ENCODE measurements at regions of chr19 and their contacts with region 1.

Region 1: DNA sequence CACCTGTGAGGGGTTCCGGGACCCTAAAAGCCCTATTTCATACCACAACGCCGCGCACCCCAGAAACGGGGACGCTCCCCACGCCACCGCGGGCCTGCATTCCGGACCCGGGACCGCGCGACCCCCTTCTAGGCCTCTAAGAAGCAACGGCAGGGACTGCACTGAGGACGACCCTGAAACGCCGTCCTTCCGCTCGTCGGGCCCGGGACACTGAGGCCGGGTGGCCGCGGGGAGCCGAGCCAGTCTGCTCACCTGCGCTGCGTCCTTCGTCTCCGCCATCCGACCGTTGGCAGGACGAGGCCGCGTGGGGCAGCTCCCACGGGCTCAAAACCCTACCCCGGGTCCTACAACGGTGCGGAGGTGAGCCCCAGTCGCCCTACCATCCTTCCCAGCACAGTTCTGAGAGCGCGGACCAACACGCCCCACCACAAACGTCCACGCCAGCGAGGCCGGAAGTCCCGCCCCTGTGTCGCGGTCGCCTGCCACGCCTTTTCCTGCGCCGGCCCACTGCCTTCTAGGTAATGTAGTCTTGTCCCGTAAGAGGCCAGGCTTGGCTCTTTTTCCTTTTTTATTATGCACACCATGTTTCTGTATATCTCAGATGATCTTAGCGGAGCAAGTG is at the start of gene ZNF550:
- DNase-seq: peak; percentile 89 to 90
- H3K4me3 ChIP-seq: peak within 1 kb of the TSS; percentile 91
- H3K4me3 Mint-ChIP-seq: peak within 1 kb of the TSS; percentile 99
- H3K27ac Mint-ChIP-seq: peak within 1 kb of the TSS; percentile 94
- H3K4me1 ChIP-seq: no peaks in the 10 kb centered on the region
- H3K4me1 Mint-ChIP-seq: peaks cover 11% of the 10 kb centered on the region
- H3K27me3 ChIP-seq: no peaks in the 10 kb centered on the region
- H3K27me3 Mint-ChIP-seq: no peaks in the 10 kb centered on the region
- CTCF ChIP-seq: no peak
- total RNA-seq, gene ZNF550: 11.2 and 11.5 TPM in 2 replicates

Region 2: DNA sequence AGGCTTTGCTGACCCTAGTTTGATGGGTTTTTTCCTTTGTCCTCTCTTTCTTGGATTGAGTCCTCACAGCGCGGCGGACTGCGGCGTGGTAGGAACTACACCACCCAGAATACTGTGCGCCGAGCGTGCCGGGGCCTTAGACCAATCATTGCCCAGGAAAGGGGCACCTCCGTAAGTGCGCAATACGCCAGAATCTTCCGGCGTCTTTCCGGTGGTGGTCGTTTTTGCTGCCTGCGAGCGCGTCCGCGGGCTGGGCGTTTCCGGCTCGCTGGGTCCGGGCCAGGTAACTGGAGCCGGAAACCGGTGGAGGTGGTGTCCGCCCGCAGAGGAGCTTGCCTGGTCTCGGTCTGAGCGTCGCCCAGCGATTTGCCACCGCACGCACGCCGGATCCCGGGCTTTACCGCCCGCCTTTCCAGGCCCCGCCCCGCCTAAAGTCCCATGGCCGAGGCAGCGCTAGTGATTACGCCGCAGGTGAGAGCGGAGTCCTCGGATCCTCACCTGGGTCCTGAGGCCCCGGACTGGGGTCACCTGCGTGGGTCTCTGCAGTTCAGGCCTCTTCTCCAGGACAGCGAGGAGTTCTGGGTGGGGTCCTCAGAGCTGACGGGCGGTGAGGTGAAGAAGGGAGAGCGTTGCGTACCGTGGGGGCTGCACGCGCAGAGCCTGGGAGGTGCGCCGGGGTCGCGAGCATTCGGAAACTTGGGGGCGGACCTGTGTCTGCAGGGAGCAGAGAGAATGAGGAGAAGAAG is 32.2 kb before region 1 on chr19 and contains the start of gene ZNF549:
- CTCF ChIA-PET with region 1: no interaction called
- POLR2A ChIA-PET with region 1: no interaction called
- intact Hi-C with region 1: loop called (anchors 1 kb)
- DNase-seq: peak; percentile 88 to 91
- H3K4me3 ChIP-seq: peak within 1 kb of the TSS; percentile 86
- H3K4me3 Mint-ChIP-seq: peak within 1 kb of the TSS; percentile 87
- H3K27ac Mint-ChIP-seq: peak within 1 kb of the TSS; percentile 83
- H3K4me1 ChIP-seq: no peaks in the 10 kb centered on the region
- H3K4me1 Mint-ChIP-seq: peaks cover 8% of the 10 kb centered on the region
- H3K27me3 ChIP-seq: no peaks in the 10 kb centered on the region
- H3K27me3 Mint-ChIP-seq: no peaks in the 10 kb centered on the region
- CTCF ChIP-seq: no peak
- total RNA-seq, gene ZNF549: 5.2 and 5.5 TPM in 2 replicates

Region 3: GRCh38 chr19:57537953-57538547 is 21.5 kb before region 1 on chr19:
- CTCF ChIA-PET with region 1: no interaction called
- POLR2A ChIA-PET with region 1: no interaction called
- intact Hi-C with region 1: loop called (anchors 1 kb)
- DNase-seq: no peak
- H3K4me3 ChIP-seq: no peak overlapping the region
- H3K4me3 Mint-ChIP-seq: no peak overlapping the region
- H3K27ac Mint-ChIP-seq: no peak overlapping the region
- H3K4me1 ChIP-seq: no peaks in the 10 kb centered on the region
- H3K4me1 Mint-ChIP-seq: no peaks in the 10 kb centered on the region
- H3K27me3 ChIP-seq: no peaks in the 10 kb centered on the region
- H3K27me3 Mint-ChIP-seq: no peaks in the 10 kb centered on the region
- CTCF ChIP-seq: no peak

Region 4: DNA sequence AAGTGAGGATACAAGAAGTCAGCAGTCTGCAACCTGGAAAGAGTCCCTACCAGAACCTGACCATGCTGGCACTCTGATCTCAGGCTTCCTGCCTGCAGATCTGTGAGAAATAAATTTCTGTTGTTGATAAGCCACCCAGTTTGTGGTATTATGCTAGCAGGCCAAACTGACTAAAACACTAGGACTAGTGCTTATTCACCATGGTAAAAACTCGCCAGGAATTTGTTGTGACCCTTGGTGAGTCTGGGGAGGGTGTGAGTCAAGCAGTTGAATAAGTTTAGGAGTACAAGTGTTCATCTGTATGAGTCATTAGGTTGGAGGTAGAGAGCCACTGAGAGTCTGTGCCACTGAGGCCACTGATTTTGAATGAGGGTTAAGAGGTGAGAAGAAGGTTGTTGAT is 28.0 kb after region 1 on chr19:
- CTCF ChIA-PET with region 1: no interaction called
- POLR2A ChIA-PET with region 1: no interaction called
- intact Hi-C with region 1: no loop called
- DNase-seq: no peak
- H3K4me3 ChIP-seq: no peak overlapping the region
- H3K4me3 Mint-ChIP-seq: no peak overlapping the region
- H3K27ac Mint-ChIP-seq: no peak overlapping the region
- H3K4me1 ChIP-seq: no peaks in the 10 kb centered on the region
- H3K4me1 Mint-ChIP-seq: no peaks in the 10 kb centered on the region
- H3K27me3 ChIP-seq: no peaks in the 10 kb centered on the region
- H3K27me3 Mint-ChIP-seq: no peaks in the 10 kb centered on the region
- CTCF ChIP-seq: no peak

Region 5: DNA sequence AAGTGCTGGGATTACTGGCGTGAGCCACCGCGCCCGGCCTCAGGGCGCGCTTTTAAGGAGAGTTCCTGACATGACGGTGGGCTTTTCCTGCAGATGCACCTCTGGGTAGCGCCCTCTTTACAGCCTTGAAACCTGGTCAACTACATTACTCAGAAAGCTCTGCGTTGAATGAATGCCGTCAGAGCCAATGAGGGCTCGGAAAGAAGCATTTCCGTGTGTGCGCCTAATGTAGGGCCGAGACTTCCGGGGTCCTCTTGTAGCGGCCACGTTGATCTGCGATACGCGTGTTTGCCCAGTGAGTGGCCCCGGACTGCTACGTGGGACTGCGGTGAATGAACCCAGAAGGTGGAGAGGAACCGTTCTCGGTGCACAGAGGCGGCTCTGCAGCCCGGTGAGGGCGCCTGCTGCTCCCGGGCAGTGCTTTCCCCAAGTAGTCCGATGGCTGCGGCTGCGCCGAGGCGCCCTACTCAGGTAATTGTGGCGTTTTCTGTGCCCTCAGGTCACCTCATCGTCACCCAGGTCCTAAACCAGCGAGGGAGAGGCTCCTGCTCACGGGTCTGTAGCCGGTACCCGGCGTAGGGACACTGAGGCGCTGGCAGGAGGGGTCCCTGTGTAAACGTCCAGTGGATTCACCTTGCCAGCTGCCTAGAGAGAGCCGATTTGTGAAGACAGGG is 260.1 kb after region 1 on chr19:
- CTCF ChIA-PET with region 1: no interaction called
- POLR2A ChIA-PET with region 1: interaction called, 11 read pairs
- intact Hi-C with region 1: no loop called
- DNase-seq: peak; percentile 89 to 95
- H3K4me3 ChIP-seq: peak overlapping the region; percentile 48
- H3K4me3 Mint-ChIP-seq: peak overlapping the region; percentile 98
- H3K27ac Mint-ChIP-seq: peak overlapping the region; percentile 94
- H3K4me1 ChIP-seq: peaks cover 59% of the 10 kb centered on the region
- H3K4me1 Mint-ChIP-seq: peaks cover 62% of the 10 kb centered on the region
- H3K27me3 ChIP-seq: no peaks in the 10 kb centered on the region
- H3K27me3 Mint-ChIP-seq: no peaks in the 10 kb centered on the region
- CTCF ChIP-seq: peak in 1 of 2 experiments; percentile 16

Region 6: DNA sequence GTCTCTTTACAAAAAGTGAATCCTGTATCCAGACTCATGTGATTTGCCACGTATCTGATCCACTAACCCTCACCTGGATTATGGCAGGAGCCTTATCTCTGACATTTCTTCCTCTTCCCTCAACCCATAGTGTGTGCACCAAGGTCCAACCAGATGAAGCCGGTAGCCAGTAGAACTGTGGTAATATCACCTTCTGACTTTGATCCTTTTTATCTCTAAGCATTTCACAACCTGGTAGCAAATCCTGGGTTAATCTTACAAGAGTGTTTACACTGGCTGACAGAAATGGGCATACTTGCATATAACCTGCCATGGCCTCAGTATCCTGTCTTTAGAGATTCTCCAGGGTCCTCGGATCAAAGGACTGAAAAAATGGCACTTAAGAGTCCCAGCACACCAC is 355.0 kb after region 1 on chr19:
- CTCF ChIA-PET with region 1: no interaction called
- POLR2A ChIA-PET with region 1: no interaction called
- intact Hi-C with region 1: loop called (anchors 2 kb)
- DNase-seq: no peak
- H3K4me3 ChIP-seq: no peak overlapping the region
- H3K4me3 Mint-ChIP-seq: peak overlapping the region; percentile 39
- H3K27ac Mint-ChIP-seq: no peak overlapping the region
- H3K4me1 ChIP-seq: 0 out of 2 replicates have a peak, but pooled peaks cover 3% of the 10 kb centered on the region
- H3K4me1 Mint-ChIP-seq: peaks cover 11% of the 10 kb centered on the region
- H3K27me3 ChIP-seq: no peaks in the 10 kb centered on the region
- H3K27me3 Mint-ChIP-seq: no peaks in the 10 kb centered on the region
- CTCF ChIP-seq: no peak